Calu3 (cell line): ENCODE measurements at regions of chr16 and their contacts with region 1.

Region 1: DNA sequence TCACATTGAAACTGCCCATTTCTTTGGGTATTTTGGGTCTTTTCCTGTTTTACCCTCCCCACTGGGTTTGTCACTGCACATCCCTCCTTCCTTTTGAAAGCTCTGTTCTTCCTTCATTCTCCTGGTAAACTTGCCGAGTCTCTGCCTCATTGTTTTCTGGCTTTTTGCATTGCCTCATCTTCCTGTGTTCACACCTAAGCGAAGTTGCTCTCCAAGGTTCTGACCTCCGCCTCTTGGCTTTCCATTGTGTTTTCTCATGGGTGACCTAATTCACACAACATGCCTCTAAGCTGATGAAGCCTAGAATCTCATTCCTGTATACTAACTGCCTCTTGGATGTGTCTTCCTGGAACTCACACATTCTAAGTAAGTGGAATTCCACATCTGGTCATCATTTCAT is 1096.1 kb upstream of the EEF2KMT start:
- DNase-seq: no peak
- H3K4me3 Mint-ChIP-seq: no peak overlapping the region
- H3K27ac Mint-ChIP-seq: no peak overlapping the region
- H3K4me1 Mint-ChIP-seq: no peaks in the 10 kb centered on the region
- H3K27me3 Mint-ChIP-seq: no peaks in the 10 kb centered on the region
- CTCF ChIP-seq: no peak

Region 2: DNA sequence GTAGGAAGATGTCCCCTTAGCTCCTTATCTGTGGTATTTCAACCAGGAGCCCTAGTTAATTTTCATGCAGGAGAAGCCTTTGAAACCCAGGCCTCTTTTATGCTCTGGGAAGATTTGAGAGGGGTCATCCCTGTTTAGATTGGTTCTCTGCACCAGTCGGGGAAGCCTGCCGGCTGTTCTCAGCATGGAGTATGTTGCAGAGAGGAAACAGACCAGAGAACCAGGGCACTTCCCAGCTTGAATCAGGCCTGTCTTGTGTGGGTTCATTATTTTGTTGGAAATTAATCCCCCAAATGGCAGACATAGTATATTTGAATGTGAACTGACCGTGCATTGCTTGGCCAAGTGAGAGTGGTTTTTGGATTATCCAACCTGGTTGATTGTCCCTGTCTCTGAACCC is 56.8 kb after region 1 on chr16:
- CTCF ChIA-PET with region 1: no interaction called
- intact Hi-C with region 1: loop called (anchors 10 kb)
- DNase-seq: no peak
- H3K4me3 Mint-ChIP-seq: no peak overlapping the region
- H3K27ac Mint-ChIP-seq: no peak overlapping the region
- H3K4me1 Mint-ChIP-seq: no peaks in the 10 kb centered on the region
- H3K27me3 Mint-ChIP-seq: no peaks in the 10 kb centered on the region
- CTCF ChIP-seq: no peak